CD4-positive, alpha-beta memory T cell (primary cell): ENCODE measurements at regions of chr14 and their contacts with region 1.

Region 1: DNA sequence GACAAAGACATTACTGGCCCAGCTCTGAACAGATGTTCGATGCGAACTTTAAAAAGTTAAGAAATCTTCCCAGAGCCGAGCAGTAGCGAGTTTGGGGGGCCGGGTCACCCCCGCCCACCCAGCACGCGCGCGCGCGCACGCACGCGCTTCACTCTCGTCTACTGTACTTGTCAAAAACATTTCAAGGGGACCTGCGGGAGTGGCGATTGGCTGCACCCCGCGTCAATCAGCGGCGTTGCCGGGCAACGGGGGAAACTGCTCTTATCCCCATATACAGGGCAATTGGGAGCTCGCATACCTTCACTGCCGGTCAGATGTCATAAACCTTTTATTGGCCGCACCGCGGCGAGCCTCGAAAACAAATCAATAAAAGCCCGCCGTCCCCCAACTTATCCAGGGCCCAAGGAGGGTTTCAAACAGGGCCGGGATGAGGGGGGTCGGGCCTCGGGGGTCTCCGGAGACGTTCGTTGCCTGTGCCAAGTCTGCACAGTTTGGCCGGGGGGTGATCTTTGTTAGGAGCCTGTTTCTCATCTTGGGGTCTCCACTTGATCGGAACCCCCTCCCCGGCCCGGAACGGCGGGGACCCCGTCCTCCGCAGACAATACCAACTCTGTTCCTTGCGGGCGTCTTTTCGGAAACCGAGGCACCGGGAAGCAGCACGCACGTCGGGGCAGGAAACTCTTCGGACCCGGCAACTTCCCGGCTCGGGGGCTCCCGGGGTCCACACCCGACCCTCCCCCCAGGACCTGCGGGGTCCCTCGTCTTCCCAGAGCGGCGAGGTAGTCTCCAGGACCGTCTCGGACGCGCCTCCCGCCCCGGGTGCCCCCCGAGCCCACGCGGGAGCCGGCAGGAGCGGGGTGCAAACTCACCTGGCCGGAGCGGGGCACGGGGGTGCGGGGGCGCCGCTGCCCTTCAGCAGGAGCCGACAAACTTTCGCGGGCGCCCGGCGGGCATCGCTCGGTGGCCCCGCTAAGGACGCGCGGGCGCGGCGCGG is 734 bp downstream of the FOXN3 start:
- DNase-seq: peak; percentile 96 to 99 (median 97)
- H3K4me3 ChIP-seq: peak overlapping the region; percentile 86
- H3K4me3 Mint-ChIP-seq: peak overlapping the region; percentile 88 to 98 (median 94)
- H3K27ac ChIP-seq: peak overlapping the region; percentile 65
- H3K27ac Mint-ChIP-seq: peak overlapping the region; percentile 93 to 99 (median 95)
- H3K4me1 ChIP-seq: peaks cover 22% of the 10 kb centered on the region
- H3K4me1 Mint-ChIP-seq: peaks cover 22 to 60% (median 41%) of the 10 kb centered on the region in 4 donors
- H3K27me3 ChIP-seq: no peaks in the 10 kb centered on the region
- H3K27me3 Mint-ChIP-seq: no peaks in the 10 kb centered on the region

Region 2: GRCh38 chr14:89178802-89179535 is 237.3 kb before region 1 on chr14:
- CTCF ChIA-PET with region 1: interaction called, 6 read pairs
- POLR2A ChIA-PET with region 1: no interaction called
- intact Hi-C with region 1: loop called (anchors 1 kb)
- DNase-seq: no peak
- H3K4me3 ChIP-seq: no peak overlapping the region
- H3K4me3 Mint-ChIP-seq: no peak overlapping the region
- H3K27ac ChIP-seq: no peak overlapping the region
- H3K27ac Mint-ChIP-seq: peak overlapping the region in 2 of 7 donors; percentile 25 to 38
- H3K4me1 ChIP-seq: peaks cover 5% of the 10 kb centered on the region
- H3K4me1 Mint-ChIP-seq: peaks cover 10 to 32% (median 23%) of the 10 kb centered on the region in 4 donors
- H3K27me3 ChIP-seq: no peaks in the 10 kb centered on the region
- H3K27me3 Mint-ChIP-seq: no peaks in the 10 kb centered on the region

Region 3: GRCh38 chr14:89365061-89365801 is 51.1 kb before region 1 on chr14:
- CTCF ChIA-PET with region 1: interaction called, 4 read pairs
- POLR2A ChIA-PET with region 1: interaction called, 7 read pairs
- intact Hi-C with region 1: loop called (anchors 5 kb)
- DNase-seq: peak; percentile 54 to 84 (median 57)
- H3K4me3 ChIP-seq: peak overlapping the region; percentile 31 to 38
- H3K4me3 Mint-ChIP-seq: peak overlapping the region; percentile 74 to 88 (median 82)
- H3K27ac ChIP-seq: peak overlapping the region; percentile 60
- H3K27ac Mint-ChIP-seq: peak overlapping the region; percentile 59 to 96 (median 86)
- H3K4me1 ChIP-seq: peaks cover 44% of the 10 kb centered on the region
- H3K4me1 Mint-ChIP-seq: peaks cover 34 to 65% (median 50%) of the 10 kb centered on the region in 4 donors
- H3K27me3 ChIP-seq: no peaks in the 10 kb centered on the region
- H3K27me3 Mint-ChIP-seq: no peaks in the 10 kb centered on the region

Region 4: GRCh38 chr14:89701211-89702043 is 285.1 kb after region 1 on chr14:
- CTCF ChIA-PET with region 1: interaction called, 3 read pairs
- POLR2A ChIA-PET with region 1: no interaction called
- intact Hi-C with region 1: loop called (anchors 1 kb)
- DNase-seq: peak; percentile 79 to 86 (median 80)
- H3K4me3 ChIP-seq: peak overlapping the region; percentile 49 to 59
- H3K4me3 Mint-ChIP-seq: peak overlapping the region; percentile 78 to 90 (median 82)
- H3K27ac ChIP-seq: peak overlapping the region; percentile 54
- H3K27ac Mint-ChIP-seq: peak overlapping the region; percentile 80 to 98 (median 93)
- H3K4me1 ChIP-seq: peaks cover 27% of the 10 kb centered on the region
- H3K4me1 Mint-ChIP-seq: peaks cover 20 to 45% (median 33%) of the 10 kb centered on the region in 4 donors
- H3K27me3 ChIP-seq: no peaks in the 10 kb centered on the region
- H3K27me3 Mint-ChIP-seq: no peaks in the 10 kb centered on the region

Region 5: GRCh38 chr14:89779712-89780111 is 363.4 kb after region 1 on chr14:
- CTCF ChIA-PET with region 1: no interaction called
- POLR2A ChIA-PET with region 1: no interaction called
- intact Hi-C with region 1: no loop called
- DNase-seq: no peak
- H3K4me3 ChIP-seq: no peak overlapping the region
- H3K4me3 Mint-ChIP-seq: no peak overlapping the region
- H3K27ac ChIP-seq: no peak overlapping the region
- H3K27ac Mint-ChIP-seq: no peak overlapping the region
- H3K4me1 ChIP-seq: no peaks in the 10 kb centered on the region
- H3K4me1 Mint-ChIP-seq: peaks cover 0 to 2% (median 0%) of the 10 kb centered on the region in 4 donors
- H3K27me3 ChIP-seq: no peaks in the 10 kb centered on the region
- H3K27me3 Mint-ChIP-seq: no peaks in the 10 kb centered on the region

Region 6: DNA sequence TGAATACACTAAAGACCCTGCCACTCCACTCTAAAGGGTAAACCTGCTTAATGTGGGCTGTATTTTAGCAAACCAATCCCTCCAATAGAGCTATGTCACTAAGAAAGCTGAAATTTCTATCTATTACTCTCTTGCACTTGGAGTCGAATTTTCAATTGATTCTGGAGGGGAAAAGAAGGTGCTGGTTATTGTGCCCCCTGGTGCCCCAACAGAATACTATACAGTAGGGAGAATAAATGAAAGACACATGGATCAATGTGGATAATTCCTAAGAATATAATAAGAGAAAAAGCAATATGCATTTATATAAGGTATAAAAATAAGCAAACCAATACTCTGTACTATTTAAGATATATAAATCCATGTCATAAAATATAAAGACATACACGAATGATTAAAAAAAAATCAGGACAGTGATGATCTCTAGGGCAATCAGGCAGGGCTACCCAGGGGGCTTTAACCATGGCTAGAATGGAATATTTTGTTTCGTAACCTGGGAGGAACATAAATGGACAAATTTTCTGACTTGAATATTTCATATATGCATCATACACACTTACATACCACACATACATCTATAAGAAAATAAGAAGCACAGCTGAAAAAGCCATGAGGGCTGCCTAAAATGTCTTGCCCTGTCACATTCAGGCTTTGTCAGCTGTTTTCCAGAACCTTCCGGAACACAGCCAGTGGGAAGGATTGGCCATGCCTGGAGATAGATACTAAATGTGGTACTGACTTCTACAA is 483.8 kb after region 1 on chr14:
- CTCF ChIA-PET with region 1: no interaction called
- POLR2A ChIA-PET with region 1: no interaction called
- intact Hi-C with region 1: loop called (anchors 5 kb)
- DNase-seq: peak in 3 of 5 donors; percentile 7 to 16 (median 15)
- H3K4me3 ChIP-seq: no peak overlapping the region
- H3K4me3 Mint-ChIP-seq: no peak overlapping the region
- H3K27ac ChIP-seq: no peak overlapping the region
- H3K27ac Mint-ChIP-seq: no peak overlapping the region
- H3K4me1 ChIP-seq: peaks cover 22% of the 10 kb centered on the region
- H3K4me1 Mint-ChIP-seq: peaks cover 15 to 31% (median 21%) of the 10 kb centered on the region in 4 donors
- H3K27me3 ChIP-seq: no peaks in the 10 kb centered on the region
- H3K27me3 Mint-ChIP-seq: no peaks in the 10 kb centered on the region